Posterior vena cava (tissue), 2 donors: ENCODE measurements at regions of chr3 and their contacts with region 1.

Region 1: DNA sequence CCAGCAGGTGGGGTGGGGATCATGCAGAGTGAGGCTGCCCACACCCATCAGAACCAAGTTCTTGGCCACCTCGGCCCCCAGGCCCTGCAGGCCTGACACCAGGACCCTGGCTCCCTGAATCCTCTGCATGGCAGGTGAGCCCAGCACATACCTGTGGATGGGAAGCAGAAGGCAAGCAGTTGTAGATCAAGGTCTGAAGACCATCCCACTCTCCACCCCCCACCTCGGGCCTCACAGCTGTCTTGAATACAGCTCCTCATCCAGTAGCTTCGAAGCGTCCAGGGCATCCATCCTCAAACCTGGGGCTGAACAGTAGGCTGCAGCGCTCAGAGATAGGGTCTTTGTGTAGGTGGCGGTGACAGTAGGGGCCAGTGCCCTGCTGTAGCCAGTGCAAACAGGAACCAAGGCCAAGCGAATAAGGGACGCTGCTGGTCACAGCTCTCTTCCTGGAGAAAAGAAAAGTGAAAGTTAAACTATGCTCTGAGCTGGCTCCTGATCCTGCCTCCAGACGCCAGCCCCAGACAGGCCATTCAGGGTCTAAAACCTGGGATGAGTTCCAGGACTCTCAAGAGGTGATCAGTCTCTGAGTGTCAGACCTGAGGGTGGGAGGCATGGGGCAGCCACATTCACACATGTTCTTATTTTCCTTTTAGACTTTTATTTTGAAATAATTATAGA is at the start of gene UBA7:
- DNase-seq: no peak
- total RNA-seq, gene UBA7: 32.1 to 56.9 TPM

Region 2: DNA sequence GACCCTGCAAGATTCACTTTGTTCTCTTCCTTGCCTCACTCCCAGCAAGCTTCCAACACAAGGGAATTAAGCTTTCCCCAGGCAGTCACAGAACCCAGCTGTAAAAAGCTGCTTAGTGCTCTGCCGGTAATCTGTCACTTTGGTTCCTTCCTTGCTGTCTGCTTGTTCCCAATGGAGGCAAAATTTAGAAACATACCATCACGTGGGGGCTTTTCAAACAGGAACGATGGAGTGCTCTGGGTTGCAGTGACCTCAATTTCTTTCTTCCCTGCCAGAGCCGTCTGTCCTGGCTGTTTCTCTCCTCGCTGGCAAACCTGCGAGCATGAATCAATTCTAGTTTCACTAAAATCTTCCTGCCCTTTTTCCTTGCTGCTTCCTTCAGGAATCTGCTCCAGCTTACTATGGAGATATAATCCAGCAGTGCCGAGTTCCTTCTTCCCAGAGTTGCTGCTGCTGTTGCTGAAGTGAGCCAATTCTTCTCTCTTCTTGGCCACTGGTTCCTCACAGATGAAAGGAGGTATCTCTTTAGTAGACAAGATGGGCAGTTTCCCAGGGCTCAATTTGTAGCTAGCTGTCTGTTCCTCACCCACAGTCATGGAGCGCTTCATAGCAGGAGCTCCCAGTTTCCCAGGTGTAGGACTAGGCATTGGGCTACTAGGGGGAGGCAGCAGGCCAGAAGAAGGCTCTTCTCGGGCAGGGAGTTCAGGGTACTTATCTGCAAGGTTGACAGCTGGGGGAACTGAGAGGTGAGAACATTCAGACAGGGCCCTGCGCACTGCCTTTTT is 1922.6 kb before region 1 on chr3:
- intact Hi-C with region 1: loop called in 1 of 2 experiments (anchors 10 kb)
- DNase-seq: no peak

Region 3: GRCh38 chr3:49899815-49900214 is 86.2 kb after region 1 on chr3:
- intact Hi-C with region 1: no loop called
- DNase-seq: no peak